Adrenal gland (tissue), 19 donors: ENCODE measurements at regions of chr12 and their contacts with region 1.

Region 1: GRCh38 chr12:48795480-48796455 is 6.9 kb upstream of the ADCY6 start:
- DNase-seq: peak; percentile 49 to 91 (median 76)
- H3K4me3 ChIP-seq: no peak overlapping the region
- H3K27ac ChIP-seq: no peak overlapping the region
- H3K4me1 ChIP-seq: no peaks in the 10 kb centered on the region
- H3K27me3 ChIP-seq: no peaks in the 10 kb centered on the region
- CTCF ChIP-seq: peak; percentile 93 to 98 (median 98)
- POLR2A ChIP-seq: no peak

Region 2: GRCh38 chr12:48758221-48758620 is 37.5 kb before region 1 on chr12:
- intact Hi-C with region 1: loop called (anchors 2 to 5 kb)
- DNase-seq: no peak
- H3K4me3 ChIP-seq: no peak overlapping the region
- H3K27ac ChIP-seq: no peak overlapping the region
- H3K4me1 ChIP-seq: peaks cover 0 to 5% of the 10 kb centered on the region in 2 donors
- H3K27me3 ChIP-seq: no peaks in the 10 kb centered on the region
- CTCF ChIP-seq: no peak
- POLR2A ChIP-seq: no peak

Region 3: GRCh38 chr12:49188914-49189367 is 393.2 kb after region 1 on chr12 and contains the start of gene TUBA1A:
- intact Hi-C with region 1: no loop called
- DNase-seq: peak; percentile 89 to 99 (median 95)
- H3K4me3 ChIP-seq: peak within 1 kb of the TSS; percentile 25 to 99 (median 63)
- H3K27ac ChIP-seq: peak within 1 kb of the TSS; percentile 73 to 98 (median 90)
- H3K4me1 ChIP-seq: peaks cover 9 to 19% of the 10 kb centered on the region in 2 donors
- H3K27me3 ChIP-seq: no peaks in the 10 kb centered on the region
- CTCF ChIP-seq: no peak
- POLR2A ChIP-seq: peak; percentile 93 to 95
- total RNA-seq, gene TUBA1A: 59.1 to 315 (median 145) TPM